CD8-positive, alpha-beta memory T cell (primary cell): ENCODE measurements at regions of chr6 and their contacts with region 1.

Region 1: DNA sequence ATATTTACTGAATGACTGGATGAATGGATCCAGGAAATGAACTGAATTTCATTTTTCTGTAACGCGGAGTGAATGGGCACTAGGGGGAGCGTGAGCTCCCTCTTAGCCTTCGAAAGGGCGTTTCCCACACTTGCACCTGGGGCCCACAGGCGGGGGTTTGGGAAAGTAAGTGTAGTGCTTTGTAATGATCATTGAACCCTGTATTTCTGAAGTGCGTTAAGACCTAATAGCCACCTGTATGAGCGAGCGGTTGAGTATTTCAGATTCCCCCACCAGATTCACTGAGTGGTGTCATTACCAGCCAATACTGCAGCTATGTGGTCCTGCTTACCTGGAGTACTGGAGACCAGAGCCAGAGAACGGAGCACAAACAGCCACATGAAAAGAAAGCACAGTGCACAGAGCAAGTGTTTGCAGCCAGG is 10.5 kb downstream of the SYTL3 start:
- DNase-seq: peak in 4 of 5 donors; percentile 19 to 69 (median 59)
- H3K4me3 ChIP-seq: no peak overlapping the region
- H3K4me3 Mint-ChIP-seq: peak overlapping the region in 5 of 7 donors; percentile 8 to 48 (median 43)
- H3K27ac ChIP-seq: no peak overlapping the region
- H3K27ac Mint-ChIP-seq: peak overlapping the region; percentile 47 to 92 (median 83)
- H3K4me1 ChIP-seq: peaks cover 29% of the 10 kb centered on the region
- H3K4me1 Mint-ChIP-seq: peaks cover 21 to 48% (median 38%) of the 10 kb centered on the region in 3 donors
- H3K27me3 ChIP-seq: no peaks in the 10 kb centered on the region
- H3K27me3 Mint-ChIP-seq: no peaks in the 10 kb centered on the region

Region 2: GRCh38 chr6:158408552-158409130 is 251.7 kb before region 1 on chr6:
- CTCF ChIA-PET with region 1: no interaction called
- POLR2A ChIA-PET with region 1: no interaction called
- DNase-seq: no peak
- H3K4me3 ChIP-seq: no peak overlapping the region
- H3K4me3 Mint-ChIP-seq: no peak overlapping the region
- H3K27ac ChIP-seq: no peak overlapping the region
- H3K27ac Mint-ChIP-seq: peak overlapping the region in 1 of 8 donors; percentile 40
- H3K4me1 ChIP-seq: peaks cover 8% of the 10 kb centered on the region
- H3K4me1 Mint-ChIP-seq: peaks cover 14 to 19% (median 15%) of the 10 kb centered on the region in 3 donors
- H3K27me3 ChIP-seq: no peaks in the 10 kb centered on the region
- H3K27me3 Mint-ChIP-seq: no peaks in the 10 kb centered on the region

Region 3: GRCh38 chr6:158644231-158645063 is 15.9 kb before region 1 on chr6 and contains the start of gene DYNLT1:
- CTCF ChIA-PET with region 1: interaction called, 26 read pairs
- POLR2A ChIA-PET with region 1: interaction called, 10 read pairs
- DNase-seq: peak; percentile 76 to 89 (median 86)
- H3K4me3 ChIP-seq: peak within 1 kb of the TSS; percentile 82
- H3K4me3 Mint-ChIP-seq: peak within 1 kb of the TSS; percentile 97 to 100 (median 99)
- H3K27ac ChIP-seq: peak within 1 kb of the TSS; percentile 93
- H3K27ac Mint-ChIP-seq: peak within 1 kb of the TSS; percentile 90 to 100 (median 99)
- H3K4me1 ChIP-seq: peaks cover 55% of the 10 kb centered on the region
- H3K4me1 Mint-ChIP-seq: peaks cover 57 to 82% (median 67%) of the 10 kb centered on the region in 3 donors
- H3K27me3 ChIP-seq: no peaks in the 10 kb centered on the region
- H3K27me3 Mint-ChIP-seq: no peaks in the 10 kb centered on the region
- total RNA-seq, gene DYNLT1: 94.8 to 103 TPM

Region 4: GRCh38 chr6:158649289-158650143 is 10.8 kb before region 1 on chr6 and contains the start of gene SYTL3:
- CTCF ChIA-PET with region 1: interaction called, 26 read pairs
- POLR2A ChIA-PET with region 1: interaction called, 10 read pairs
- DNase-seq: peak; percentile 67 to 94 (median 88)
- H3K4me3 ChIP-seq: peak within 1 kb of the TSS; percentile 27
- H3K4me3 Mint-ChIP-seq: peak within 1 kb of the TSS; percentile 79 to 97 (median 87)
- H3K27ac ChIP-seq: peak within 1 kb of the TSS; percentile 60
- H3K27ac Mint-ChIP-seq: peak within 1 kb of the TSS; percentile 84 to 99 (median 95)
- H3K4me1 ChIP-seq: peaks cover 55% of the 10 kb centered on the region
- H3K4me1 Mint-ChIP-seq: peaks cover 60 to 85% (median 64%) of the 10 kb centered on the region in 3 donors
- H3K27me3 ChIP-seq: no peaks in the 10 kb centered on the region
- H3K27me3 Mint-ChIP-seq: peaks cover 0 to 2% of the 10 kb centered on the region in 2 donors
- total RNA-seq, gene SYTL3: 96.6 to 102 TPM

Region 5: GRCh38 chr6:158752613-158753012 is 92.3 kb after region 1 on chr6:
- CTCF ChIA-PET with region 1: no interaction called
- POLR2A ChIA-PET with region 1: no interaction called
- DNase-seq: no peak
- H3K4me3 ChIP-seq: no peak overlapping the region
- H3K4me3 Mint-ChIP-seq: no peak overlapping the region
- H3K27ac ChIP-seq: no peak overlapping the region
- H3K27ac Mint-ChIP-seq: peak overlapping the region in 2 of 8 donors; percentile 14 to 50
- H3K4me1 ChIP-seq: no peaks in the 10 kb centered on the region
- H3K4me1 Mint-ChIP-seq: no peaks in the 10 kb centered on the region
- H3K27me3 ChIP-seq: no peaks in the 10 kb centered on the region
- H3K27me3 Mint-ChIP-seq: no peaks in the 10 kb centered on the region

Region 6: GRCh38 chr6:158849899-158850806 is 189.8 kb after region 1 on chr6:
- CTCF ChIA-PET with region 1: no interaction called
- POLR2A ChIA-PET with region 1: no interaction called
- DNase-seq: peak; percentile 38 to 85 (median 73)
- H3K4me3 ChIP-seq: peak overlapping the region; percentile 3
- H3K4me3 Mint-ChIP-seq: peak overlapping the region; percentile 58 to 84 (median 76)
- H3K27ac ChIP-seq: peak overlapping the region; percentile 95
- H3K27ac Mint-ChIP-seq: peak overlapping the region in 5 of 8 donors; percentile 98 to 100 (median 99)
- H3K4me1 ChIP-seq: peaks cover 50% of the 10 kb centered on the region
- H3K4me1 Mint-ChIP-seq: peaks cover 0 to 29% (median 29%) of the 10 kb centered on the region in 3 donors
- H3K27me3 ChIP-seq: no peaks in the 10 kb centered on the region
- H3K27me3 Mint-ChIP-seq: peaks cover 0 to 2% of the 10 kb centered on the region in 2 donors